ENCODE measurements at regions of chr22 and their contacts with region 1.

Region 1: GRCh38 chr22:22753526-22754267 is 109.3 kb downstream of the GGTLC2 start:
- DNase-seq: peak; percentile 83
- ATAC-seq: peak; percentile 97
- H3K4me3 Mint-ChIP-seq: no peak overlapping the region
- H3K27ac Mint-ChIP-seq: no peak overlapping the region
- H3K4me1 Mint-ChIP-seq: no peaks in the 10 kb centered on the region
- H3K27me3 Mint-ChIP-seq: peaks cover 96% of the 10 kb centered on the region
- CTCF ChIP-seq: peak; percentile 33; the same call in 1 of the 2 replicates

Region 2: GRCh38 chr22:22655452-22656290 is 98.0 kb before region 1 on chr22:
- CTCF ChIA-PET with region 1: no interaction called
- POLR2A ChIA-PET with region 1: no interaction called
- DNase-seq: no peak
- ATAC-seq: no peak
- H3K4me3 Mint-ChIP-seq: no peak overlapping the region
- H3K27ac Mint-ChIP-seq: no peak overlapping the region
- H3K4me1 Mint-ChIP-seq: no peaks in the 10 kb centered on the region
- H3K27me3 Mint-ChIP-seq: peaks cover 68% of the 10 kb centered on the region
- CTCF ChIP-seq: no peak

Region 3: GRCh38 chr22:22733881-22734373 is 19.8 kb before region 1 on chr22:
- CTCF ChIA-PET with region 1: interaction called, 10 read pairs
- POLR2A ChIA-PET with region 1: no interaction called
- DNase-seq: no peak
- ATAC-seq: no peak
- H3K4me3 Mint-ChIP-seq: no peak overlapping the region
- H3K27ac Mint-ChIP-seq: no peak overlapping the region
- H3K4me1 Mint-ChIP-seq: peaks cover 13% of the 10 kb centered on the region
- H3K27me3 Mint-ChIP-seq: peaks cover 98% of the 10 kb centered on the region
- CTCF ChIP-seq: no peak

Region 4: GRCh38 chr22:22810018-22810427 is 56.3 kb after region 1 on chr22:
- CTCF ChIA-PET with region 1: interaction called, 10 read pairs
- POLR2A ChIA-PET with region 1: no interaction called
- DNase-seq: peak; percentile 68
- ATAC-seq: peak; percentile 91
- H3K4me3 Mint-ChIP-seq: no peak overlapping the region
- H3K27ac Mint-ChIP-seq: no peak overlapping the region
- H3K4me1 Mint-ChIP-seq: no peaks in the 10 kb centered on the region
- H3K27me3 Mint-ChIP-seq: peaks cover 84% of the 10 kb centered on the region
- CTCF ChIP-seq: peak; percentile 66; the same call in 1 of the 2 replicates

Region 5: GRCh38 chr22:22823131-22823810 is 69.6 kb after region 1 on chr22:
- CTCF ChIA-PET with region 1: no interaction called
- POLR2A ChIA-PET with region 1: no interaction called
- DNase-seq: no peak
- ATAC-seq: no peak
- H3K4me3 Mint-ChIP-seq: no peak overlapping the region
- H3K27ac Mint-ChIP-seq: peak overlapping the region; percentile 27; the same call in 1 of the 2 replicates
- H3K4me1 Mint-ChIP-seq: no peaks in the 10 kb centered on the region
- H3K27me3 Mint-ChIP-seq: peaks cover 94% of the 10 kb centered on the region
- CTCF ChIP-seq: no peak